Activated T-helper 2 cell treated with anti-CD3 and anti-CD28 coated beads, Interferon-gamma antibody, Interleukin-2, Interleukin-4, amounts not matched to agents 10 μg/mL and 5 μg/mL and 100 μg/mL, durations not matched to agents 14 hours and 24 hours and 36 hours (primary cell): ENCODE measurements at regions of chr11 and their contacts with region 1.

Region 1: DNA sequence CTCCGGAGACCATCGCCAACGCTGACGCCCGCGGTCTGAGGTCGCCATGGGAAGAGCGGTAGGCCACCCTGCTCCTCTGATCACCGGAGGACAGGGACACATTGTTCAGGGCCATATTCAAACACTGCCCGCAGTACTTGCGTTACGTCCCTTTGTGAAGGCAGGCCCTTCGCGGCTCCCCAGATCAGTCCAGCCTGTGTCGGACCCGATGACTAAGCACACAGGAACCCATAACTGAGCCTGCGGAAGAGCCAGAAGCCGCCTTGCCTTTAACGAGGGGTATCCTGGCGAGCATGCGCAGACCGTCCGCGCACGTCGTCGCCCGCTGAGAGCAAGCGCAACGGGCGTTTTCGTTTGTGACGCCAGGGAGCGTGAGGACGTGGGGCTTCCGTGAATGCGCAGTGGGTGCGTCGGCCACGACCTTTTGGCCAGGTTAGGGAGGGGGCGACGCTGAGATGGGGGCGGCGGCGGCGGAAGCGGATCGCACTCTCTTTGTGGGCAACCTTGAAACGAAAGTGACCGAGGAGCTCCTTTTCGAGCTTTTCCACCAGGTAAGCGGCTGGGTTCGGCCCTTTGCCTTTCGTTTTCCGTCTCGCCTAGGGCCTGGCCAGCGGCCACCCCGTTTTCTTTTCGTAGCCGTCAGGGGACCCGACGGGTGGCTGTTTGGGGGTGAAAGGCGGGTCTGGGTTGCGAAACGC is at the starts of genes C11orf71 and RBM7:
- DNase-seq: peak; percentile 97
- H3K4me3 Mint-ChIP-seq: peak within 1 kb of the TSS; percentile 92
- H3K27ac Mint-ChIP-seq: peak within 1 kb of the TSS; percentile 97
- H3K4me1 Mint-ChIP-seq: peaks cover 37% of the 10 kb centered on the region
- H3K27me3 Mint-ChIP-seq: no peaks in the 10 kb centered on the region
- total RNA-seq, gene C11orf71: 5.8 and 6.3 TPM in 2 replicates
- total RNA-seq, gene RBM7: 39.4 and 39.6 TPM in 2 replicates

Region 2: DNA sequence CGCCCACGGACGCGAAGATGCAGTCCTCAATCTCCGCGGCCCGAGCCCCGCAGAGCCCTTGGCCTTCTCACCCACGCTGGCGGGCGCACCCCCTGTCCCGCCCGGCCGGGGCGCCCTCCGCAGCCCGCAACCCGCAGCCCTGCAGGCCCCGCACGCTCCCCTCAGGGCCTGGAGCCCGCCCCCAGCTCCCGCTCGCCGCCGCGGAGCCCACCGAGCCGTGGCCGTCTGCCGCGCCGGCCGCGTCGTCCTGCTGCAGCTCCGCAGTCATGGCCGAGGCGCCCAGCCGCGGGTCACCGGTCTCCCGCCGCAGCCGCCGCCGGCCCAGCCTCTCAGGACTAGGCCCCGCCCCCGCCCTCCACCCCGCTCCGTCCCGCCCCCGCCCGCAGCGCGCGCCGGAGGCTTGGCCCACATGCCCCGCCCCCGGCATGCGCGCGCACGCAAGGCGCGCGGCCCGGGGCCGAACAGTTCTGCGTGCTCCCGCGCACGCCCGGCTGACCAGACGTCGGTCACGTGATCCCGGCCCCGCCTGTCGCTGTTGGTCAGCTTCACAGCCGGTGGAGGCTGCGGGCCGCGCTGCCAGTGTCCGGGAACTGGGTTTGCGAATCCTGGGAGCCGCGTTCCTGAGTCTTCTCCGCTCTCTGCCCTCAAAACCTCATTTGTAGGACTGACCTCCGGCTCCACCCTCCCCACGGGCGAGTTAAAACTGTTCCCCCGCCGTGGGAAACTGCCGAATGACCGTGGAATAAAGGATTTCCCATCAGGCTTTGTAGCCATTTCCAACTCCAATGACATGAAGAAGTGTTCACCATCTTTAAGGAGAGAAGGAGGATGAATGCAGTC is 524.9 kb before region 1 on chr11 and contains the start of gene USP28:
- intact Hi-C with region 1: loop called (anchors 1 kb)
- DNase-seq: peak; percentile 77
- H3K4me3 Mint-ChIP-seq: peak within 1 kb of the TSS; percentile 98
- H3K27ac Mint-ChIP-seq: peak within 1 kb of the TSS; percentile 98
- H3K4me1 Mint-ChIP-seq: peaks cover 46% of the 10 kb centered on the region
- H3K27me3 Mint-ChIP-seq: no peaks in the 10 kb centered on the region
- total RNA-seq, gene USP28: 34.8 and 38.4 TPM in 2 replicates

Region 3: DNA sequence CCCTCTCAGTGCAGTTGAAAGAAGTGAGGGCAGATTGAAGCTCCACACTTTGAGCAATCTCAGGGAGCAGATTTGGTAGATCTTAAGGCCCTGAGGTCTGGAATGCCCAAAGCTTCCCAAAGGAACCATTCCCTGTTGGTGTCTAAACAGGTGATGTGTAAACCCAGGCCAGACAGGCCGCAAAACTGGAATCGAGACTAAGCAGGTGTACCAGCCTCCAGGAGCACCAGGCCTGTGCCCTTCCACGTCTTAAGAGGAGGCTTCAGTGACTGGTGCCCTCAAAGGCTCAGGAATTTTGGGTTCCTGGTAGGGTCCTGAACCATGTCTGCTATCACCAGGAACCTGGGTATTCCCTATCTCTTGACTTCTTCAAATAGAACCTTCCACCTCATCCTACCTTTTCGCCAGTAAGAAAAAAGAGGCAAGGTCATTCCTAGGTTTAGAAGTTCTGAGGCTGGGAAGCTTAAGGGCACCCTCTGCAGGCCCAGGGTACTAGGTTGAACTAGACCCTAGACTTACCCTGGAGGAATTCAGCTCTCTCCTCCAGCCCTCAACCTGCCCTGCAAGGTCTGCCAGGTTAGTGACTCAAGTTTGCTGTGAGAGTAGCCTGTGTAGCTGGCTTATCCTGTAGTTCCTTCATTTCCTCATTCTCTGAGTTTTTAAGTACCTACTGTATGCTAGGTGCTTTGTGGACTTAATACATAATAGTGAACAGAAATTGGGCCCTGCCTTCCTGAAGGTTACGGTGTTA is 204.2 kb before region 1 on chr11:
- intact Hi-C with region 1: no loop called
- DNase-seq: no peak
- H3K4me3 Mint-ChIP-seq: no peak overlapping the region
- H3K27ac Mint-ChIP-seq: no peak overlapping the region
- H3K4me1 Mint-ChIP-seq: peaks cover 16% of the 10 kb centered on the region
- H3K27me3 Mint-ChIP-seq: peaks cover 2% of the 10 kb centered on the region

Region 4: DNA sequence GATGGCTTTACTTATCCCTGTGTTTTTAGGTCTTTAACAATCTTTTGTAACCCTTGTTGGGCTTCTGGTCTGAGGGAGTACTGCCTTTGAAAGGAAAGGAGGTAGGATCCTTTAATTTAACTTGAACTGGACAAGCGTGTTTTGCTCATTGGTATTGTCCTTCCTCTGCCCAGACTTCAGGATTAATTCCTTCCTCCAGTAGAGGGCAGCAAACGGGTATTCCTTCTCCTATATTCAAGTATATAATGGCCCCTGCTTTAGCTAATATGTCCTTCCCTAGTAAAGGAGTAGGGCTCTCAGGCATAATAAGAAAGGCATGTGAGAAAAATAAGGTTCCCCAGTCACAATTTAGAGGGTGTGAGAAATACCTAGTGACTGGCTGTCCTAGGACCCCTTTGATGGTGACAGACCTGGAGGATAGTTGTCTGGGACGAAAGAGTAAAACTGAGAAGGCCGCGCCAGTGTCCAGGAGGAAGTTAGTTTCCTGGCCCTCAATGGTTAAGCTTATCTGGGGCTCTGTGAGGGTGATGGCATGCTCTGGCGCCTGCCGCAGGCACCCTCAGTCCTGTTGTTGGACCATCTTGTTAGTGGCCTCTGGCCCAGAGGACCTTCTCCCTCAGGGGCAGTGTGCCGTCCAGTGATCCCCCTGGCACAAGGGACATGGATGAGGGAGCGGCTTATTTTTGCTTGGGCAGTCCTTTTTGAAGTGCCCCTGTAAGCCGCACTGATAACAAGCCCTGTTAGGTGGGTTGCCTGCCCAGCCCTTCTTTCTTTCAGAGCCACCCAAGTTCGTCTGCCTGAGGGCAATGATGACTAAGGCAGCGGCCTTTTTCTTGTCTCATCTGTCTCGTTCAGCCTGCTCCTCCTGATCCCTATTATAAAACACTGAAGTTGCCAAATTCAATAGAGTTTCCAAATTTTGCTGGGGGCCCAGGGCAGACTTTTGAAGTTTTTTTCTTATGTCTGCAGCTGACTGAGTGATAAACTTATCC is 51.9 kb before region 1 on chr11:
- intact Hi-C with region 1: loop called (anchors 5 kb)
- DNase-seq: no peak
- H3K4me3 Mint-ChIP-seq: no peak overlapping the region
- H3K27ac Mint-ChIP-seq: no peak overlapping the region
- H3K4me1 Mint-ChIP-seq: peaks cover 4% of the 10 kb centered on the region
- H3K27me3 Mint-ChIP-seq: no peaks in the 10 kb centered on the region

Region 5: GRCh38 chr11:114384487-114384886 is 15.9 kb before region 1 on chr11:
- intact Hi-C with region 1: loop called (anchors 1 kb)
- DNase-seq: no peak
- H3K4me3 Mint-ChIP-seq: no peak overlapping the region
- H3K27ac Mint-ChIP-seq: no peak overlapping the region
- H3K4me1 Mint-ChIP-seq: peaks cover 10% of the 10 kb centered on the region
- H3K27me3 Mint-ChIP-seq: peaks cover 10% of the 10 kb centered on the region

Region 6: GRCh38 chr11:114439229-114440120 is 39.1 kb after region 1 on chr11 and contains the start of gene REXO2:
- intact Hi-C with region 1: loop called (anchors 1 kb)
- DNase-seq: peak; percentile 91
- H3K4me3 Mint-ChIP-seq: peak within 1 kb of the TSS; percentile 92
- H3K27ac Mint-ChIP-seq: peak within 1 kb of the TSS; percentile 90
- H3K4me1 Mint-ChIP-seq: peaks cover 24% of the 10 kb centered on the region
- H3K27me3 Mint-ChIP-seq: no peaks in the 10 kb centered on the region
- total RNA-seq, gene REXO2: 94.0 and 98.9 TPM in 2 replicates